Activated CD4-positive, alpha-beta T cell treated with anti-CD3 and anti-CD28 coated beads, Interleukin-2, amount 10 ng/mL, durations not matched to agents 7 days and 5 days (primary cell): ENCODE measurements at regions of chr19 and their contacts with region 1.

Region 1: GRCh38 chr19:55503502-55504251 is 15.4 kb downstream of the SSC5D start:
- DNase-seq: peak; percentile 92
- H3K4me3 Mint-ChIP-seq: peak overlapping the region; percentile 73
- H3K27ac Mint-ChIP-seq: peak overlapping the region; percentile 92
- H3K4me1 Mint-ChIP-seq: peaks cover 21% of the 10 kb centered on the region
- H3K27me3 Mint-ChIP-seq: no peaks in the 10 kb centered on the region

Region 2: GRCh38 chr19:55146078-55146704 is 357.5 kb before region 1 on chr19:
- CTCF ChIA-PET with region 1: interaction called, 10 read pairs
- POLR2A ChIA-PET with region 1: no interaction called
- DNase-seq: no peak
- H3K4me3 Mint-ChIP-seq: no peak overlapping the region
- H3K27ac Mint-ChIP-seq: no peak overlapping the region
- H3K4me1 Mint-ChIP-seq: peaks cover 2% of the 10 kb centered on the region
- H3K27me3 Mint-ChIP-seq: peaks cover 23% of the 10 kb centered on the region

Region 3: GRCh38 chr19:55467236-55468053 is 36.2 kb before region 1 on chr19:
- CTCF ChIA-PET with region 1: interaction called, 22 read pairs
- POLR2A ChIA-PET with region 1: no interaction called
- DNase-seq: peak; percentile 65
- H3K4me3 Mint-ChIP-seq: no peak overlapping the region
- H3K27ac Mint-ChIP-seq: peak overlapping the region; percentile 9
- H3K4me1 Mint-ChIP-seq: peaks cover 7% of the 10 kb centered on the region
- H3K27me3 Mint-ChIP-seq: peaks cover 2% of the 10 kb centered on the region

Region 4: DNA sequence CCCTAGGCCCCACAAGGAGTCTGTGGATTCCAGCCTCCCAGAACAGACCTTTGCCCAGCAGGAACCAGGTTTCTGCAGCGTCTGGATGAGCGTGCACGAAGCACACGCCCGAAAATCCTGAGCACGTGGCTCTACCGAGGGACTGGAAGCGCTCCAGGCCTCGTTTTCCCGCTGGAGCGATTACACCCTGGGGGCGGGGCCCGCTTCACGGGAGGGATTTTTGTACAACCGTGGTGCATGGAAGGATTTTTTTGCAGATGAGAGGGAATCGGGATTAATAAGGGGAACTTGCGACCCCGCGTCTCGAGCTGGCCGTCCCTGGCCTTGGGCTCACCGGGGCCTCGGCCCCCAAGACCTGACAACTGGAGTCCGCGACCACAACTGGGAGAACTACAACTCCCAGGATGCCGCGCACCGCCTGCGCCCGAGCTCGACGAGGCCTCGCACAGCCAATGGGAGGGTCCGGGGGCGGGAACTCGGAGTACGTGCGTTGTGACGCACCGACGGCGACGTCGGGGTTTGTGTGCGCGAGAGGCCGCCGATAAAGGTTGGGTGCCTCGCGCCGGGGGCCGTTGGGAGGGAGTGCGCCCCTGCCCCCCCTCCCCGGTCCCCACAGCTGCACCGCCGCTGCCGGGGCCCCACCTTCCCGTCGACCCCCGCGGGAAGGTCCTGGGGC is 27.4 kb before region 1 on chr19 and contains the start of gene ZNF628:
- CTCF ChIA-PET with region 1: interaction called, 11 read pairs
- POLR2A ChIA-PET with region 1: no interaction called
- DNase-seq: peak; percentile 98
- H3K4me3 Mint-ChIP-seq: peak within 1 kb of the TSS; percentile 87
- H3K27ac Mint-ChIP-seq: peak within 1 kb of the TSS; percentile 90
- H3K4me1 Mint-ChIP-seq: peaks cover 33% of the 10 kb centered on the region
- H3K27me3 Mint-ChIP-seq: no peaks in the 10 kb centered on the region
- total RNA-seq, gene ZNF628: 7.3 to 9.7 TPM

Region 5: GRCh38 chr19:55487632-55488152 is 16.0 kb before region 1 on chr19:
- CTCF ChIA-PET with region 1: interaction called, 15 read pairs
- POLR2A ChIA-PET with region 1: no interaction called
- DNase-seq: no peak
- H3K4me3 Mint-ChIP-seq: no peak overlapping the region
- H3K27ac Mint-ChIP-seq: peak overlapping the region; percentile 41
- H3K4me1 Mint-ChIP-seq: peaks cover 8% of the 10 kb centered on the region
- H3K27me3 Mint-ChIP-seq: peaks cover 2% of the 10 kb centered on the region

Region 6: GRCh38 chr19:55526216-55527196 is 22.8 kb after region 1 on chr19:
- CTCF ChIA-PET with region 1: no interaction called
- POLR2A ChIA-PET with region 1: no interaction called
- DNase-seq: no peak
- H3K4me3 Mint-ChIP-seq: no peak overlapping the region
- H3K27ac Mint-ChIP-seq: no peak overlapping the region
- H3K4me1 Mint-ChIP-seq: no peaks in the 10 kb centered on the region
- H3K27me3 Mint-ChIP-seq: no peaks in the 10 kb centered on the region

Region 7: DNA sequence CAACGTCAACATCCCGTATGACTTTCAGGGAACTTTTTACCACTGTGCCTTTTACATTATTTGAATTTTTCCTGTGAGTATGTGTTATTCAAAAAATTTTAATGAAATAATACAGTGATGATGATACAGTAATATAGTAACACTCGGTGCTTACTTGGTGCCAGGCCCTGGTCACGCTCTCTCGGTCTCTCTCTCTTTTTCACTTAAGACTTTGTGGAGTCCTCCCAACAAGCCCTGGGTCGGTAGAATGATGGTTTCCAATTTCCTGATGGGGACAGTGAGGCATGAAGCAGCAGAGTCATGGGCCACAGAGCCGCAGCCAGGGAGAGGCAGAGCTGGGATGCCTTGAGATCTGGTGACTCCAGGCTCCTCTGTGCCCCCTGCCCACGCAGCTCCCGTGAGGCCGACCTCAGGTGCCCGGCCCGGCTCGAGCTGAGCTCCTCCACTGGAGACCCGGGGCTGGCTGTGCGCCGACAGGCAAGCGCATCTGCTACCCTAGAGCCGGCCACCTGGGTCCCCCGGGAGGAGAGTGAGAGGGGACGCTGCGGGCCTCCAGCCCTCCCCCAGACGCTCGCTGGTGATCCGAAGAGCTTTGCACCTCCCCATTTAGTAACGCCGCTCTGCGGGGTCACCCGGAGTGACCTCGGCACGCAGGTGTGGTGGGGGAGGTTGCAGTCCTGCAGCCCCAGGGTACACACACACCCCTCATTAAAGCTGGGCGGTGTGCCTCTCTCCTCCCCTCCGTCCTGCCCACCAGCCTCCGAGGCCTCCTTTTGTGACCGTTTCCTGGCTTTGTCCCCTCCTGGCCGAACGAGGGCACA is 46.0 kb after region 1 on chr19:
- CTCF ChIA-PET with region 1: no interaction called
- POLR2A ChIA-PET with region 1: no interaction called
- DNase-seq: no peak
- H3K4me3 Mint-ChIP-seq: no peak overlapping the region
- H3K27ac Mint-ChIP-seq: no peak overlapping the region
- H3K4me1 Mint-ChIP-seq: no peaks in the 10 kb centered on the region
- H3K27me3 Mint-ChIP-seq: peaks cover 7% of the 10 kb centered on the region

Region 8: DNA sequence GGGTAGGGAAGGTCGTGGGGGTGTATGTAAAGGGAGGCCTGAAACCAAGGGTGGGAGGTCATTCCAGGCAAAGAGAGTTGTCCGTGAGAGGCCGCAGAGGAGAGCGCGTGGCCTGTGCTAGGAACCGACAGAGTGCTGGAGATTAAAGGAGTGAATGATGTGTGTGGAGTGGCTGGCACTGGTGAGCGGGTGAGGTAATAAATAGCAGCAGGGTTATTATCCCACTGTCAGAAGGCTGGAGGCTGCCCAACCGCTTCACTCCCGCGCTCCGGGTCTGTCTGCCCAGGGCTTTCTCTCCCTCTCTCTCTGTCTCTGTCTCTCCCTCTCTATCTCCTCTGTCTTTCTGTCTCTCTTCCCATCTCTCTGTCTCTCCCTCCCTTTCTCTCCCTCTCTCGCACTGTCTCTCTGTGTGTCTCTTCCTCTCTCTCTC is 59.6 kb after region 1 on chr19:
- CTCF ChIA-PET with region 1: no interaction called
- POLR2A ChIA-PET with region 1: no interaction called
- DNase-seq: no peak
- H3K4me3 Mint-ChIP-seq: no peak overlapping the region
- H3K27ac Mint-ChIP-seq: no peak overlapping the region
- H3K4me1 Mint-ChIP-seq: no peaks in the 10 kb centered on the region
- H3K27me3 Mint-ChIP-seq: peaks cover 3% of the 10 kb centered on the region

Region 9: DNA sequence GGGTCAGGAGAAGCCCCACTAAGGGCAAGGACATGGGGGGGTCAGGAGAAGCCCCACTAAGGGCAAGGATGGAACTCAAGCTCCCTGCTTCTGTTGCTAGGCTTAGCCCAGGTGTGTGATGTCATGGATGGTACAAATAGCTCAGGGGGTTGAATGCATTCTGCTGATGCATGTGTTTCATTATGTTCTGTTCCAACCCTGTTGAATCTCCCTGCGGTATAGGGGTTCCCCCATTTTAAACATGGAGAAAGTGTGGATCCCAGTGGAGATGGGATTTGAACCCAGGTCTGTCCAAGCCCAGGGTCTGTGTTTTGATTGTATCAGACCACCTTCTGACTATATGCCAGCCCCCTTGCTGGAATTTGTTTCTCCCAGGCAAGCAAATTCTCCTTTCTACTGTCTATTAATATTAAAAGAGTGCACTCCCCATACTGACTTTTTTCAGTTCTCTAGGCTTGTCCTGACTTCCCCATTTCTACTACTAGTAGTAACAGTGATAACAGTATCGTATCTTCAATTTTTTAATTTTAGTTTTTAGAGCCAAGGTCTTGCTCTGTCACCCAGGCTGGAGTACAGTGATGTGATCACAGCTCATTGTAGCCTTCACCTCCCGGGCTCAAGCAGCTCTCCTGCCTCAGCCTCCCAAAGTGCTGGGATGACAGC is 108.4 kb after region 1 on chr19:
- CTCF ChIA-PET with region 1: no interaction called
- POLR2A ChIA-PET with region 1: no interaction called
- DNase-seq: no peak
- H3K4me3 Mint-ChIP-seq: no peak overlapping the region
- H3K27ac Mint-ChIP-seq: no peak overlapping the region
- H3K4me1 Mint-ChIP-seq: peaks cover 22% of the 10 kb centered on the region
- H3K27me3 Mint-ChIP-seq: no peaks in the 10 kb centered on the region

Region 10: DNA sequence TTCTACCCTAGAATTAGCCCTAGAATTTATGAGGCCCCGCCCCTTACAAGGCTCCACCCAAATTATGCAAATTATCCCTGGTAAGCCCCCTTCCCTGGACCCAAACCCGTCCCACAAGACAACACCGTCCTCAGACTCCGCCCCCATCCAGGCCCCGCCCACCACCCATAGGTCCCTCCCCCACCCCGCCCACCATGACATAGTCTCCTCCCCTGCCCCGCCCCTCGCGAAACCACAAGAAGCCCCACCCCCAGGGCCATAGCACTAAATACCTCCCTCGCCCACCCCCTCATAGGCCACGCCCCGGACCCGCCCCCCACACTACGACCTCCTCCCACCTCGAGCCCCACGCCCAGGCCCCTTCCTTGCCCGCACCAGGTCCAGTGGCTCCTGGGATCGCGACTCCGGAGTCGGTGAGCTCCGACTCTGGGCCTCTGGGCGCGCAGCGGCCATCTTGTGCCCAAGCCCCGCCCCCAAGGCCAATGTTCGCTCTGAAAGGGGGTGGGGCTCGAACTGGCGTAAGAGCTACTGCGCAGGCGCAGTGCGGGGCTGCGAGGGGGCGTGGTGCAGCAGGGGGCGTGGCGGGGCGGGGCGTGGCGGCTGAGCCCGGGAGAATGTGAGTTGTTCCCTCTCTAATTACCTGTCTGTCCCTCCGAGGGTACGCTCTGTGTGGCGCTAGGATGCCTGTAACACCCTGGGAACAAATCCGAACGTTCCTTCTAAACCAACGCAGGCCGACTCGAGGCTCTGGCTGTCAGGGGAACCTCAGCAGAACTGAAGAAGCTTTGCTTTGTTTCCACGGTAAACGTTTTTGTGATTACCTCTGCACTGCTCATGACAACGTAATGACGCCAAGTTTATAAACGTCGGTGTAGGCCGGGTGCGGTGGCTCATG is 120.7 kb after region 1 on chr19 and contains the start of gene ZNF784:
- CTCF ChIA-PET with region 1: interaction called, 19 read pairs
- POLR2A ChIA-PET with region 1: interaction called, 3 read pairs
- DNase-seq: peak; percentile 92
- H3K4me3 Mint-ChIP-seq: peak within 1 kb of the TSS; percentile 91
- H3K27ac Mint-ChIP-seq: peak within 1 kb of the TSS; percentile 99
- H3K4me1 Mint-ChIP-seq: peaks cover 55% of the 10 kb centered on the region
- H3K27me3 Mint-ChIP-seq: peaks cover 12% of the 10 kb centered on the region
- total RNA-seq, gene ZNF784: 4.3 to 5.8 TPM

Region 11: DNA sequence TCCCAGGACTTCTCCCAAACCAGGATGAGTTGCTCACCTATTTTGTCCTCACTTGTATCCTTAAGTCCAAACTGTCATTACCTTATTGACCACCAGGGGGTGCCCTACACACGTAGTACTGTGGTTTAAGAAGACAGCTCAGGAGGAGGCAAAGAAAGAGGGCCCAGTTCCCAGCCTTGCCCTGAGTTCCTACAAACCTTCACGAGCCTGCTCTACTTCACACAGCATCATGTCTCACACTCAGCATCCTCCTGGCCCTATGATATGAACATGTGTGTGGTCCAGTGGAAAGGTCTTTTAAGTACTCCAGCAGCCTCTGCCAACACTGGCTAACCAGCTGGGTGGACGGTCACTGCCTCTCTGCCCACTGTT is 128.8 kb after region 1 on chr19:
- CTCF ChIA-PET with region 1: interaction called, 19 read pairs
- POLR2A ChIA-PET with region 1: no interaction called
- DNase-seq: peak; percentile 95
- H3K4me3 Mint-ChIP-seq: no peak overlapping the region
- H3K27ac Mint-ChIP-seq: peak overlapping the region; percentile 33
- H3K4me1 Mint-ChIP-seq: peaks cover 49% of the 10 kb centered on the region
- H3K27me3 Mint-ChIP-seq: peaks cover 10% of the 10 kb centered on the region